Activated B cell treated with CpG ODN at 0.5 μM for 24 hours (primary cell): ENCODE measurements at regions of chr9 and their contacts with region 1.

Region 1: GRCh38 chr9:71079451-71079850 is 42.0 kb downstream of the TRPM3 start:
- DNase-seq: no peak
- ATAC-seq: no peak
- H3K4me3 Mint-ChIP-seq: no peak overlapping the region
- H3K27ac Mint-ChIP-seq: no peak overlapping the region
- H3K4me1 Mint-ChIP-seq: no peaks in the 10 kb centered on the region
- H3K27me3 Mint-ChIP-seq: no peaks in the 10 kb centered on the region
- CTCF ChIP-seq: no peak

Region 2: DNA sequence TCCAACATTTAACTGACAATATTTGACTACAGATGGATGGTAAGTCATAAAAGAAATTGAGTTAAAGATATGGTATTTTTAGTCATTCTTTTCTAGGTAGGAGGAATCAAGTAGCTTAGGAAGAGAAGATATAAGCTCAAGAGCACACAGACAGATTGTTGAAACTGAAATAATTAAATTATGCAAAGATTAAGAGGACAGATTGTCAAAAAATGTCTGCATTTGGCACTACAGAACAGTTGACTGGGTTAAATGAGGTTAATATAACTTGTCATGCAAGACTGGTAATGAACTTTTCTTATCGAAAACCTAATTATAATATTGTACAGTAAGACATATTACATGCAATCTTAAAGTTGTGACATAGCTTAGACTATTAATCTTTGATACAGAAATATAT is 78.3 kb after region 1 on chr9:
- CTCF ChIA-PET with region 1: no interaction called
- POLR2A ChIA-PET with region 1: no interaction called
- intact Hi-C with region 1: loop called (anchors 10 kb)
- DNase-seq: no peak
- ATAC-seq: no peak
- H3K4me3 Mint-ChIP-seq: no peak overlapping the region
- H3K27ac Mint-ChIP-seq: no peak overlapping the region
- H3K4me1 Mint-ChIP-seq: no peaks in the 10 kb centered on the region
- H3K27me3 Mint-ChIP-seq: no peaks in the 10 kb centered on the region
- CTCF ChIP-seq: no peak